ENCODE measurements at regions of chr19 and their contacts with region 1.

Region 1: DNA sequence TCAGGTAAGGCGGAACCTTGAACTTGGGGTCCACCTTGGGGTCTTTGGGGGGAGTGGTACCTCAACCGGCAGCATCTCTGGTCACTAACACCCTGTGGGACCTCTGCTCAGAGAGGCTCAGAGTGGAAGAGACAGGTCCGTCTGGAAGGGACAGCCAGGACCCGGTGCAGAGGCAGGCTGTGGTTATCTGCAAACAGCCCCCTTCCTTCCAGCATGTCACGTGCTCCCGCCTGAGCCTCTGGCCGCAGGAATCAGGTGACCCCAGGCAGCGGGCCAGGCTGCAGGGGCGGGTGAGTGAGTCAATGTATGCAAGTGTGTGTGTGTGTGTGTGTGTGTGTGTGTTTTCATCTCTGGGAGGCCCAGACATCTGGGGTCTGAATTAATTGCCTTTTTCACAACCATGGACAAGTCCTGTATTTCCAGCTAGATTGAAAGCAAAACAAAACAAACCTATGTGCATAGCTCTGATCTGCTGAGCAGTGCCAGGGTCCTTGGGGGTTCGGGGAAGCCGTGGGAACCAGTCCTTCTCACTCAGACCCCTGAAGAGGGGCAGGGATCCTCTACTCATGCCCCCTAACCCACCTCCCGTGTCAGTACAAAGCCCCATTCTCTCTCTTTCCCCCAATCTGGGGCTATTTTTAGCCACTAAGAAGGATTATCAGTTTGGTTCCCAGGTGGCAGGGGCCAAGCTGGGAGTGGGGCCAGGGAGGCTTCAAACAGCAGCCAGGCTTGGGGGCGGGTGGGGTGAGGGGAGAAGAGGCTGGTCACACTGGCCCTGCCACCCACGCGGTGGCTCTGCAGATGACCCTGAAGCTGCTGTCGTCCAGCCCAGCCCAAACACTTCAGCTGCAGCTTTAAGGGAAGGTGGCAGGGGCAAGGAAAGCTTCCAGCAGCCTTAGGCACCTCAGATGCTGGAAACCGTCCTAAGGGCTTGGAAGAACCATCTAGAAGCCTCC is 31.4 kb downstream of the CERS4 start:
- DNase-seq: peak; percentile 75
- ATAC-seq: peak; percentile 78
- H3K4me3 Mint-ChIP-seq: no peak overlapping the region
- H3K27ac Mint-ChIP-seq: peak overlapping the region; percentile 16
- H3K4me1 Mint-ChIP-seq: peaks cover 14% of the 10 kb centered on the region
- H3K27me3 Mint-ChIP-seq: no peaks in the 10 kb centered on the region

Region 2: DNA sequence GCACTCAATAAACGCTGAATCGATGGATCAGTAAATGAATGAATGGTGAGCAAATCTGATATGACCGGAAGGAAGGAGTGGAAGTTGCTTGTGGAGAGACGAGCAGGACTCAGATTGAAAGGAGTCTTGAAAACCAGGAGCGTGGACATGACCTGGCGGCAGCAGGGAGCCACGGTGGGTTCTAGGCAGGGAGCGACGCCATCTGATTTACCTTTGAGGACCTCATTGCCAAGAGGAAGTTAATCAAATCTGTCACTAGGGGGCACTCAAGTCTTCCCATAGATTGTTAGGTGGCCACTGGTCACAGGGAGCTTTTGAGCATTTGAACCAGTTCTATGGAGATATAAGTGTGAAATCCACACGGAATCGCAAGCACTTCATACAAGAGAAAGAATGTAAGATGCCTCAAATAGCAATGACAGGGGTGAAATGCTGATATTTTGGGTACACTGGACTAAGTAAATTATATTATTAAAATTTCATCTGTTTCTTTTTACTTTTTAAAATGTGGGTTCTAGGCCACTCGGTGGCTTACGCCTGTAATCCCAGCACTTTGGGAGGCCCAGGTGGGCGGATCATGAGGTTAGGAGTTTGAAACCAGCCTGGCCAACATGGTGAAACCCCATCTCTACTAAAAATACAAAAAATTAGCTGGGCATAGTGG is 82.0 kb before region 1 on chr19:
- CTCF ChIA-PET with region 1: interaction called, 12 read pairs
- POLR2A ChIA-PET with region 1: no interaction called
- intact Hi-C with region 1: no loop called
- DNase-seq: peak; percentile 59
- ATAC-seq: peak; percentile 87
- H3K4me3 Mint-ChIP-seq: no peak overlapping the region
- H3K27ac Mint-ChIP-seq: no peak overlapping the region
- H3K4me1 Mint-ChIP-seq: peaks cover 4% of the 10 kb centered on the region
- H3K27me3 Mint-ChIP-seq: peaks cover 9% of the 10 kb centered on the region